Heart left ventricle (tissue), 16 donors: ENCODE measurements at regions of chr12 and their contacts with region 1.

Region 1: DNA sequence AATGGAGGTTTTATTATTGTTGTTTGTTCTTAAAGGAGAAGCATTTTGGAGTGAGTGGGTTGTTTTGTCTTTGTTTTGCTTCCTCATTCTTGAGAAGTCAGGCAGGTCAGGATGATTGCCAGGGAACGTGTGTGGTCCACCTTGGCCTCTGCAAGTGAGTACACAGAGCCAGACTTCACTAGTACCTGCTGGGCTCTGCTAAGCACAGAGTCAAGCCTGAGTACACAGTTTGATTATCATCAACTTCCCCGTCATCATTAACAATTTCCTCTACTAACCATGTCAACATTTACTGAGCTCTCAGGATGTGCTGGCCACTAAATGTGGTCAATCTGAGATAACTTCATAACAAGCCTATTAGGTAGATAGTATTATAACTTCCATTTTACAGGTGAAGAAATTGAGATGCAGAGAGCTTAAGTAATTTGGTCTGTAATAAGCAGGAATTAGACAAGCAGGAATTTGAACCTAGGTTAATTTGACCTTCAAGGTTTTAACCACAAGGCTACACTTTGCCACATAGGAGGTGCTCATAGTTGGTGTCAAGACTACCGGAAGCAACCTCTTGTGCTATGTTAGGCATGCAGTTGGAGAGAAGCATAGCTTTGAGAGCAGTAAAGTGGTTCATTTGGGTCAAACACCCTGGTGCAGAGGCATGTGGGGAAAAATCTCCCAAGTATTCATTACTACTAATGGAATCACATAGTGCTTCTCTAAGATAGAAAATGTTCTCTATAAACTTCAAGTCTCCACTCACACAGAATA is 178.3 kb downstream of the NUAK1 start:
- DNase-seq: no peak
- ATAC-seq: peak in 1 of 4 donors; percentile 52
- H3K4me3 ChIP-seq: no peak overlapping the region
- H3K27ac ChIP-seq: peak overlapping the region in 5 of 12 donors; percentile 2 to 19 (median 10)
- H3K4me1 ChIP-seq: peaks cover 0 to 42% (median 15%) of the 10 kb centered on the region in 12 donors
- H3K27me3 ChIP-seq: no peaks in the 10 kb centered on the region
- CTCF ChIP-seq: no peak
- POLR2A ChIP-seq: no peak

Region 2: GRCh38 chr12:105820429-105821140 is 139.9 kb before region 1 on chr12:
- intact Hi-C with region 1: loop called in 1 of 10 experiments (anchors 10 kb)
- DNase-seq: peak in 3 of 5 donors; percentile 15 to 51 (median 49)
- ATAC-seq: peak; percentile 81 to 89 (median 86)
- H3K4me3 ChIP-seq: no peak overlapping the region
- H3K27ac ChIP-seq: peak overlapping the region; percentile 2 to 65 (median 36)
- H3K4me1 ChIP-seq: peaks cover 0 to 37% (median 26%) of the 10 kb centered on the region in 12 donors
- H3K27me3 ChIP-seq: no peaks in the 10 kb centered on the region
- CTCF ChIP-seq: no peak
- POLR2A ChIP-seq: no peak

Region 3: GRCh38 chr12:107042801-107043200 is 1082.3 kb after region 1 on chr12:
- intact Hi-C with region 1: no loop called
- DNase-seq: no peak
- ATAC-seq: no peak
- H3K4me3 ChIP-seq: no peak overlapping the region
- H3K27ac ChIP-seq: no peak overlapping the region
- H3K4me1 ChIP-seq: peaks cover 0 to 4% (median 0%) of the 10 kb centered on the region in 12 donors
- H3K27me3 ChIP-seq: no peaks in the 10 kb centered on the region
- CTCF ChIP-seq: no peak
- POLR2A ChIP-seq: no peak